Astrocyte of the cerebellum (primary cell): ENCODE measurements at regions of chr5 and their contacts with region 1.

Region 1: DNA sequence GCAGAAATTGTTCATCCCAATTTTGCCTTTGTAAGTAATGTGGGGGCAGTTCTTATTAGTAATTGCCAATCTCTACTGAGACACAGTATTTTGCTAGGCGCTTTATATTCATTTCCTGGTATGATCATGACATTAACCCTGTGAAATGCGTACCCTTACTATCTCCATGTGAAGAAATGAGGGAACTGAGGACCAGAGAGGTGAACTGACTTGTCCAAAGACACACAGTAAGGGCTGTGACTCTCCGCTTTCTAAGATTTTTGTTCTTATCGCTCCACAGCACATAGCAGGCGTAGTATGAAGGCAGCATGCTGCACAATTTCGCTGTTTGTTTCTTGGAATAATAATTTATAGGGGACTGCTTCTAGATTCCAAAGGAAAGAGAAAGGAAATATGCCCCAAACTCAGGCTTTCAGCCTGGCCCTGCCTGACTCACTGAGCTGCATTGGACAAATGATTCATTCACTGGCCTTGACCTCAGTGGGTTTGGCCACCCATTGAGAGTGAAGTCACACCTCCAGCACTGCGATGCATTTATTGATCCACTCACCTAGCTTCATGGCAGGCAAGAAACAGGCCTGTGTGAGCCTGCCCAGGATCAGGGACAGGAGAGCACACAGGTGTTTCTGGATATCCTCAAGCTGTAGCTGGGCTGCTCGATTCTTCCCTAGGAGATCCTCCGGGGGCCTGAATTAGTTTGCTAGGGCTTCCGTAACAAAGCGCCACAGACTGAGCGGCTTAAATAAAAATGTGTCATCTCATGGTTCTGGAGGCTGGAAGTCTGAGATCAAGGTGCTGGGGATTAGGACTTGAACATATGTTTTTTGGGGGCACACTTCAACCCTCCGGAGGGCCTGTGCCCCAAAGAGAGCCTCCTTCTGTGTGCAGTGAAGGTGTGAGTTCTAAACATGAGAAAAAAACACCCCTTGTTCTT is 7.2 kb upstream of the DUSP1 start:
- DNase-seq: no peak
- H3K4me3 ChIP-seq: no peak overlapping the region
- CTCF ChIP-seq: no peak

Region 2: DNA sequence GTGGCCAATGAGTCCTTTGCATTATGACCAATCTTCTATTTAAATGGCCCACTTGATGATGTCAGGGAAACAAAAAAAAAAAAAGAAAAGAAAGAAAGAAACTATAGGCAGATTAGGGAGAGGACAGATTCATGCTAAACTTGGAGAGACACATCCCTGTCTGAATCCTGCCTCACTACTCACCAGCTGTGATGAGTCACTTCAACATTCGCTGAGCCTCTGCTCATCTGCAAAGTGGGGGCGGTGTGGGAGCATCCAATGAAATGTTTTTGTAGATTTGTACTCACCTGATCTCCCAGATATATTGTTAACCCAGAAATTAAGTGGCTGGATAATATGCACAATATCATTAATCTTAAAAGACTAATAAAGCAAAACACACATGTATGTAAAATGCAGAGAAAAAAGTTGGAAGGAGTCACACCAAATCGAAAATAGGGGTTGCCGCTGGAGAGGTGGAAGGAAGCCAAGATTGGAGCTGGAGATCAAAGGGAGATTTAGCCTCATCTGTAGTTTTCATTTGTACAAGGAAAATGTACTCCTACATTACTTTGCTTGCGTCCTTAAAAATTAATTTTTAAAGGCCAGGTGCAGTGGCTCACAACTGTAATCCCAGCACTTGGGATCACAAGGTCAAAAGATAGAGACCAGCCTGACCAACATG is 38.9 kb after region 1 on chr5:
- in situ Hi-C with region 1: loop called (anchors 5 kb)
- DNase-seq: no peak
- H3K4me3 ChIP-seq: no peak overlapping the region
- CTCF ChIP-seq: no peak

Region 3: DNA sequence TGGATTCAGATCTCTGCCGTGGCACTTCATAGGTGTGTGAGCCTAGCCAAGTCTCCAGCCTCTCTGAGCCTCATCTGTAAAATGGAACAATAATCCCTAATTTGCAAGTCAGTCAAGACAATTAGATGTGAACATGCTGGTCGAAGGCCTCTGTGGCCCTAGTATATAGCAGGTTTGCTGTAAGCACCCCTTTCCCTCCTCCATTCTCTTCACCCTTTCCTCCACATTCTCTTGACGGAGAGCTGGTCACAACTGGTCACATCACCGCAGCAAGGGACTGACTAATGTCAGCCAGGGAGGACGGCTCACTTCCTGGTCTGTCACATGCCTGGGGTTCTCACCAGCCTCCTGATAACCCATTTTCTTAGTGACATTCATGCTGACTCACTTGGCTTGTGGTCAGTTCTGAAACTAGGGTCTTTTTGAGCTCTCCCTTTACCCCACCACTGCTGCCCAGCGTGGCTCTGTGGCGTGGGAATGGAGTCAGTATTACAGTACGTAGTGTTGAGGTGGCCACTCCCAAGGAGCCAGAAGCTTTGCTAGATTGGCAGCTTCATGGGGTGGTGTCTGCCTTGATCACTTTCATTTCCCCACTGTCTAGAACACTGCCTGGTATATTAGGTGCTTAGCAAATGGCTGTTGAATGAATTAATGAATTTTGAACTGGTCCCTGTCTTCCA is 103.7 kb after region 1 on chr5:
- in situ Hi-C with region 1: loop called (anchors 25 kb)
- DNase-seq: no peak
- H3K4me3 ChIP-seq: no peak overlapping the region
- CTCF ChIP-seq: no peak